ENCODE measurements at regions of chr17 and their contacts with region 1.

Region 1: DNA sequence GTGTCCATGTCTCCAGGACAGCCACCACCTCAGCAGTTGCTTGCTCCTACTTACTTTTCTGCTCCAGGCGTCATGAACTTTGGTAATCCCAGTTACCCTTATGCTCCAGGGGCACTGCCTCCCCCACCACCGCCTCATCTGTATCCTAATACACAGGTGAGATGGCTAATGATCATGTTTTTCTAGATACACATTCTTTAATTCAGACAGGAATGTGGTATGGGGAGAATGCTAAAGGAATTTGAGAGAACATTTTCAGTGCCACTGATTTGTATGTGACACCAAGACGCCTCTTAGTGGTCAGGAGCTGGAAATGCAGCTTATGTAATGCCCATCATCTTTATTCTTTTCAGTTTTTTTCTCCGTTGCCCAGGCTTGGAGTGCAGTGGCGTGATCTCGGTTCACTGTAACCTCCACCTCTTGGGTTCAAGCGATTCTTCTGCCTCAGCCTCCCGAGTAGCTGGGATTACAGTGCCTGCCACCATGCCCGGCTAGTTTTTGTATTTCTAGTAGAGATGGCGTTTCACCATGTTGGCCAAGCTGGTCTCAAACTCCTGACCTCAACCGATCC is 8.9 kb upstream of the RAPGEFL1 start:
- DNase-seq: peak; percentile 74
- ATAC-seq: peak; percentile 89
- H3K4me3 ChIP-seq: no peak overlapping the region
- H3K4me3 Mint-ChIP-seq: no peak overlapping the region
- H3K27ac ChIP-seq: no peak overlapping the region
- H3K27ac Mint-ChIP-seq: peak overlapping the region; percentile 53
- H3K4me1 ChIP-seq: no peaks in the 10 kb centered on the region
- H3K4me1 Mint-ChIP-seq: peaks cover 4% of the 10 kb centered on the region
- H3K27me3 ChIP-seq: no peaks in the 10 kb centered on the region
- H3K27me3 Mint-ChIP-seq: no peaks in the 10 kb centered on the region
- CTCF ChIP-seq: peak; percentile 77

Region 2: DNA sequence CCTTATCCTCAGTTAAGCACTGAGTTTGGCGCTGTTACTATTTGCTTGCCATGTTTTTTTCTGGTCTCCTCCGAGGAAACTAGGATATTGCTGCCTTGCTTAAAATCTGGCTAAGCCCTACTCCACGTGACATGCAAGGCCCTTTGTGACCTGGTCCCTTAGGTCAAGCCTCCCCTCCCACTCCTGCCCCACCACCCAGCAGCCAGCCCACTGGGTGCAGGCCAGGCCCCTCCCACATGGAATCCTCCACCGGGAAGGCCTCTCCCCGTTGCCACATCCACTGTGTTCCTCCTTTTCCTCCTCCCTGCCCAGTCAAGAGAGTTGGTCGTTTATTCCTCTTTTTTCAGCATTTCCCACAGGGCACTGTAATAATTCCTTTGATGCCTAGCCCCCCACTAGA is 171.5 kb before region 1 on chr17:
- CTCF ChIA-PET with region 1: no interaction called
- POLR2A ChIA-PET with region 1: no interaction called
- intact Hi-C with region 1: no loop called
- DNase-seq: no peak
- ATAC-seq: no peak
- H3K4me3 ChIP-seq: no peak overlapping the region
- H3K4me3 Mint-ChIP-seq: no peak overlapping the region
- H3K27ac ChIP-seq: no peak overlapping the region
- H3K27ac Mint-ChIP-seq: no peak overlapping the region
- H3K4me1 ChIP-seq: no peaks in the 10 kb centered on the region
- H3K4me1 Mint-ChIP-seq: no peaks in the 10 kb centered on the region
- H3K27me3 ChIP-seq: no peaks in the 10 kb centered on the region
- H3K27me3 Mint-ChIP-seq: no peaks in the 10 kb centered on the region
- CTCF ChIP-seq: no peak

Region 3: DNA sequence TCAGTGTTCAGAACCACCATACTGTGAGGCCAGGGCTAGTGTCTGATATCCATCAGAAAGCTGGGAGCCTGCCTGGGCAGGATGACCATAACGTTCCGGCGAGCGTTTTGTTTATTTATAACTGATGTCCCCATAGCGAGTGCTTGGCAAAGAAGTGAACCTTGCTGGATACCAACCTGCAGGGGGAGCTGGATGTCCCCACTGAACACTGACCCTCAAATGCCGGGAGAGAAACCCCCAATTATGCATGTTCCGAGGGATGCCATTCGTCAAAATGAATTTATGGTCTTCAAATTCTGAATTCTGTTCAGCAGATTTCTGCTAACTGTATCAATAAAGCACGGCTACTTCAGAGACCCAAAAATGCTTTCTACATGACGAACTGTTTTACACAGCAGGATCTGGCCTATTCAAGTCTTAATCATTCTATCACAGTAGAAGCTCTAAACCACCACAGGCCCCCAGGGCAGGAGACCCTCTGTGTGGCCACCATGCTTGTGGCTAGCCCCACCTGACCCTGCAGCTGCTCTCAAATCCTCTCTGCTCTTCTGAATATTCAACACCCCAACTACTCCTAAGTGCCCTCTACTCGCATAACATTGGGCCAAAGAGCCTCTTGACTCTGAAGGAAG is 129.3 kb before region 1 on chr17:
- CTCF ChIA-PET with region 1: interaction called, 4 read pairs
- POLR2A ChIA-PET with region 1: no interaction called
- intact Hi-C with region 1: loop called (anchors 1 kb)
- DNase-seq: no peak
- ATAC-seq: no peak
- H3K4me3 ChIP-seq: no peak overlapping the region
- H3K4me3 Mint-ChIP-seq: no peak overlapping the region
- H3K27ac ChIP-seq: no peak overlapping the region
- H3K27ac Mint-ChIP-seq: no peak overlapping the region
- H3K4me1 ChIP-seq: no peaks in the 10 kb centered on the region
- H3K4me1 Mint-ChIP-seq: no peaks in the 10 kb centered on the region
- H3K27me3 ChIP-seq: no peaks in the 10 kb centered on the region
- H3K27me3 Mint-ChIP-seq: no peaks in the 10 kb centered on the region
- CTCF ChIP-seq: peak; percentile 28

Region 4: GRCh38 chr17:40098846-40099618 is 69.3 kb before region 1 on chr17:
- CTCF ChIA-PET with region 1: interaction called, 17 read pairs
- POLR2A ChIA-PET with region 1: no interaction called
- intact Hi-C with region 1: no loop called
- DNase-seq: peak; percentile 98
- ATAC-seq: peak; percentile 64
- H3K4me3 ChIP-seq: peak overlapping the region; percentile 51 to 91 (median 78)
- H3K4me3 Mint-ChIP-seq: peak overlapping the region; percentile 77
- H3K27ac ChIP-seq: peak overlapping the region; percentile 92 to 93
- H3K27ac Mint-ChIP-seq: peak overlapping the region; percentile 89
- H3K4me1 ChIP-seq: peaks cover 53 to 70% of the 10 kb centered on the region in 2 donors
- H3K4me1 Mint-ChIP-seq: peaks cover 74% of the 10 kb centered on the region
- H3K27me3 ChIP-seq: no peaks in the 10 kb centered on the region
- H3K27me3 Mint-ChIP-seq: no peaks in the 10 kb centered on the region
- CTCF ChIP-seq: no peak

Region 5: DNA sequence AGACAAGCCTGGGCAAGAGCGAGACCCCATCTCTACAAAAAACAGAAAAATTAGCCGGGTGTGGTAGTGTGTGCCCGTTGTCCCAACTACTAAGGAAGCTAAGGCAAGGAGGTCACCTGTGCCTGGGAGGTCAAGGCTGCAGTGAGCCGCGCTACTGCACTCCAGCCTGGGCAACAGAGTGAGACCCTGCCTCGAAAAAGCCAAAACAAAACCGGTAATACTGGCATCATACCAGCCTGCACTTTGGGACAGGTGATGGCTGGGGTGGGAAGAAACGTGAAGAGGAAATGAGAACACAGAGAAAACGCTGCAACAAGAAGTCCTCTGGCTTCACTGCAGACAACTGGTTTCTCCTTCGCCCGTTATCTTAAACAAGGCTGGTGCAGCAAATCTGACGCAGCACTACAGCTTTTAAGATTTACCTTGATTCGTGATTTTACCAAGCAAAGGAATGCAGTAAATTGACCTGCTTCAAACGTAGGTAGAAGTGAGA is 28.7 kb before region 1 on chr17:
- CTCF ChIA-PET with region 1: interaction called, 21 read pairs
- POLR2A ChIA-PET with region 1: no interaction called
- intact Hi-C with region 1: loop called (anchors 1 kb)
- DNase-seq: no peak
- ATAC-seq: peak; percentile 1
- H3K4me3 ChIP-seq: peak overlapping the region; percentile 74 to 93 (median 84)
- H3K4me3 Mint-ChIP-seq: peak overlapping the region; percentile 94
- H3K27ac ChIP-seq: peak overlapping the region; percentile 94 to 95
- H3K27ac Mint-ChIP-seq: peak overlapping the region; percentile 98
- H3K4me1 ChIP-seq: peaks cover 19 to 24% of the 10 kb centered on the region in 2 donors
- H3K4me1 Mint-ChIP-seq: peaks cover 23% of the 10 kb centered on the region
- H3K27me3 ChIP-seq: no peaks in the 10 kb centered on the region
- H3K27me3 Mint-ChIP-seq: no peaks in the 10 kb centered on the region
- CTCF ChIP-seq: no peak

Measured in B cell (primary cell).